ENCODE measurements at regions of chr12 and their contacts with region 1.

Region 1: GRCh38 chr12:55707841-55708694 is at the start of gene ITGA7:
- DNase-seq: peak; percentile 82 to 87
- ATAC-seq: peak; percentile 43 to 73 (median 56)
- H3K4me3 ChIP-seq: peak within 1 kb of the TSS; percentile 41 to 87 (median 72)
- H3K27ac ChIP-seq: peak within 1 kb of the TSS; percentile 69 to 98 (median 89)
- H3K4me1 ChIP-seq: peaks cover 0 to 60% (median 37%) of the 10 kb centered on the region in 9 donors
- H3K27me3 ChIP-seq: peaks cover 0 to 20% (median 0%) of the 10 kb centered on the region in 7 donors
- CTCF ChIP-seq: no peak
- total RNA-seq, gene ITGA7: 422 to 750 (median 538) TPM

Region 2: GRCh38 chr12:55728939-55729823 is 21.1 kb after region 1 on chr12 and contains the start of gene CD63:
- intact Hi-C with region 1: loop called in 1 of 10 experiments (anchors 2 kb)
- DNase-seq: peak; percentile 91 to 94
- ATAC-seq: peak; percentile 86 to 93 (median 90)
- H3K4me3 ChIP-seq: peak within 1 kb of the TSS; percentile 66 to 98 (median 87)
- H3K27ac ChIP-seq: peak within 1 kb of the TSS; percentile 96 to 100 (median 99)
- H3K4me1 ChIP-seq: peaks cover 14 to 60% (median 51%) of the 10 kb centered on the region in 9 donors
- H3K27me3 ChIP-seq: no peaks in the 10 kb centered on the region
- CTCF ChIP-seq: no peak
- total RNA-seq, gene CD63: 565 to 1,547 (median 768) TPM